K562 (cell line): ENCODE measurements at regions of chr2 and their contacts with region 1.

Region 1: DNA sequence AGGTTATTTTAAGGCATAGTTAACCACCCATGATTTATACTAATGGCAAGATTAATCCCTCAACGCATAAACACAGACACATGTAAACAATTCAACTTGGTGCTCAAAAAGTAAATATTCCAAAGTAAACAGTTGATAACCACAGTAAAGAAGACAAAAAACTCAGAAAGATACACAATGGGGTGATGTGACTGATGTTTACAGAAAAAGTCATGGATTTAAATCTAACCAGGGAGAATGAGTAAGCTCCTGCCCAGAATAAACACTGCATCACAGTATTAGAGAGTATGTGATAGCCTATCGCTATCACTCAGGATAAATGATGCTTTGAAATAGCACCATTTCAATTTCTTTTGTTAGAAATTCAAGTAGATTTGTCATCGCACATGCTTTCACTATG is 49.3 kb downstream of the HIBCH start:
- DNase-seq: no peak
- ATAC-seq: no peak
- H3K4me3 ChIP-seq: no peak overlapping the region
- H3K27ac ChIP-seq: no peak overlapping the region
- H3K4me1 ChIP-seq: peaks cover 10 to 20% of the 10 kb centered on the region in 2 experiments; a peak in 3 of 5 replicates
- H3K27me3 ChIP-seq: no peaks in the 10 kb centered on the region
- CTCF ChIP-seq: no peak
- EP300 ChIP-seq: no peak
- POLR2A ChIP-seq: no peak
- RAD21 ChIP-seq: no peak

Region 2: GRCh38 chr2:189937691-189938090 is 332.6 kb before region 1 on chr2:
- CTCF ChIA-PET with region 1: no interaction called
- POLR2A ChIA-PET with region 1: no interaction called
- in situ Hi-C with region 1: no loop called
- intact Hi-C with region 1: no loop called
- DNase-seq: no peak
- ATAC-seq: no peak
- H3K4me3 ChIP-seq: no peak overlapping the region
- H3K27ac ChIP-seq: no peak overlapping the region
- H3K4me1 ChIP-seq: no peaks in the 10 kb centered on the region
- H3K27me3 ChIP-seq: no peaks in the 10 kb centered on the region
- CTCF ChIP-seq: no peak
- EP300 ChIP-seq: no peak
- POLR2A ChIP-seq: no peak
- RAD21 ChIP-seq: no peak

Region 3: DNA sequence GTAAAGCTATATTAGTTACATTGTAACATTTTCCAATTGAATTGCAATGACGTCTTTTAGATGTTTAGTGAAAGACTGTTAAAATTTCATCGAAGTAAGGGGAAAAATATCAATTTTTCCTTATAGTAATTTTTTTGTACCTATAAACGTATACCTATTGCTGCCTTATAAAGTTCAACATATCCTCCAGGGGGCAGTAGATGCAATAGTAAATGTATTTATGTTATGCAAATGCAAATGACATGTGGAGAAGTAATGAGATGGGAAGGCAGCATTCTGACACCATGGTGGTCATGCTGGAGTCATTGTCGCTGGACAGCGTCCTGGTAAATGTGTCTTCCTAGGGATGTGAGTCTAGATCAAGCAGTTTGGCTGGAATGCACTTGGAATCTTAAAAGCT is 246.4 kb before region 1 on chr2:
- CTCF ChIA-PET with region 1: no interaction called
- POLR2A ChIA-PET with region 1: no interaction called
- in situ Hi-C with region 1: no loop called
- intact Hi-C with region 1: no loop called
- DNase-seq: peak; percentile 6 to 70 (median 16)
- ATAC-seq: peak; percentile 88
- H3K4me3 ChIP-seq: no peak overlapping the region
- H3K27ac ChIP-seq: no peak overlapping the region
- H3K4me1 ChIP-seq: no peaks in the 10 kb centered on the region
- H3K27me3 ChIP-seq: no peaks in the 10 kb centered on the region
- CTCF ChIP-seq: peak; percentile 35 to 60 (median 35); a peak in 4 of 6 replicates
- EP300 ChIP-seq: no peak
- POLR2A ChIP-seq: no peak
- RAD21 ChIP-seq: peak; percentile 31 to 50

Region 4: DNA sequence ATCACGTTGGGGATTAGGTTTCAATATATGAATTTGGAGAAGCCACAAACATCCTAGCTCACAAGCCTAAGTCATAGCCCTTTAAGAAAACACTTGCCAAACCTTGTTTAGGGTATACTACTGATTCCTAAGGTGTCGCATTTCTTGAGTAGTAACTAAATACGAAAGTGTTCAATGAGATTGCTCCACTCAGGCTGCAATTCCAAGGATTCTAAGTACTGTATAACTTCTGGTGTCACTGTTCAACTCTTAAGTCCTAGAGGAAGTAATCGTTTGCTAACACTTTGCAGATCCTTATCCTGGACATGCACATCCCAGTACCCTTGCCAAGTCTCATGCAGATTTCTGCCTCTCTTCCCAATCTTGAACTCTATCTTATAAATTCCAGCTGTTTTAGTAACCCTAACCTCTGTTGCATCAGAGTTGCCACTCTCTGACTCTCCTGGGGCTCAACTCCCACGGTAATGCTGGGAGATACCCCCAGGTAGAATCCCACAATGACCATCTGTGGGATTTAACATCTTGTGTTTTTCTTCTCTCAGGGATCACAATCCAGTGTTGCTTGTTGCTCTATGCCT is 73.1 kb before region 1 on chr2:
- CTCF ChIA-PET with region 1: no interaction called
- POLR2A ChIA-PET with region 1: no interaction called
- in situ Hi-C with region 1: no loop called
- intact Hi-C with region 1: no loop called
- DNase-seq: no peak
- ATAC-seq: peak; percentile 8; the same call in 2 of the 3 replicates
- H3K4me3 ChIP-seq: no peak overlapping the region
- H3K27ac ChIP-seq: no peak overlapping the region
- H3K4me1 ChIP-seq: peaks cover 8 to 17% of the 10 kb centered on the region in 2 experiments; a peak in 4 of 5 replicates
- H3K27me3 ChIP-seq: no peaks in the 10 kb centered on the region
- CTCF ChIP-seq: no peak
- EP300 ChIP-seq: no peak
- POLR2A ChIP-seq: peak; percentile 25
- RAD21 ChIP-seq: no peak

Region 5: GRCh38 chr2:190214426-190215194 is 55.7 kb before region 1 on chr2:
- CTCF ChIA-PET with region 1: no interaction called
- POLR2A ChIA-PET with region 1: interaction called, 3 read pairs
- in situ Hi-C with region 1: no loop called
- intact Hi-C with region 1: loop called (anchors 5 kb)
- DNase-seq: no peak
- ATAC-seq: no peak
- H3K4me3 ChIP-seq: no peak overlapping the region
- H3K27ac ChIP-seq: peak overlapping the region; percentile 33; the same call in 1 of the 3 replicates
- H3K4me1 ChIP-seq: peaks cover 3 to 18% of the 10 kb centered on the region in 2 experiments; a peak in 3 of 5 replicates
- H3K27me3 ChIP-seq: no peaks in the 10 kb centered on the region
- CTCF ChIP-seq: no peak
- EP300 ChIP-seq: no peak
- POLR2A ChIP-seq: no peak
- RAD21 ChIP-seq: no peak